GM12878 (cell line): ENCODE measurements at regions of chr4 and their contacts with region 1.

Region 1: GRCh38 chr4:47567511-47567910 is 82.4 kb downstream of the ATP10D start:
- DNase-seq: no peak
- ATAC-seq: no peak
- H3K4me3 ChIP-seq: no peak overlapping the region
- H3K27ac ChIP-seq: no peak overlapping the region
- H3K4me1 ChIP-seq: peaks cover 5% of the 10 kb centered on the region; the same call in 1 of the 2 replicates
- H3K27me3 ChIP-seq: no peaks in the 10 kb centered on the region; a peak in 1 of 4 replicates
- CTCF ChIP-seq: no peak
- EP300 ChIP-seq: no peak
- POLR2A ChIP-seq: no peak
- RAD21 ChIP-seq: no peak

Region 2: GRCh38 chr4:47557255-47557654 is 10.3 kb before region 1 on chr4:
- CTCF ChIA-PET with region 1: interaction called, 9 read pairs
- POLR2A ChIA-PET with region 1: no interaction called
- RAD21 ChIA-PET with region 1: no interaction called
- SMC1A ChIA-PET with region 1: interaction called, 14 read pairs
- in situ Hi-C with region 1: no loop called
- intact Hi-C with region 1: no loop called
- DNase-seq: no peak
- ATAC-seq: no peak
- H3K4me3 ChIP-seq: no peak overlapping the region
- H3K27ac ChIP-seq: no peak overlapping the region
- H3K4me1 ChIP-seq: no peaks in the 10 kb centered on the region
- H3K27me3 ChIP-seq: no peaks in the 10 kb centered on the region
- CTCF ChIP-seq: no peak
- EP300 ChIP-seq: no peak
- POLR2A ChIP-seq: no peak
- RAD21 ChIP-seq: no peak

Region 3: DNA sequence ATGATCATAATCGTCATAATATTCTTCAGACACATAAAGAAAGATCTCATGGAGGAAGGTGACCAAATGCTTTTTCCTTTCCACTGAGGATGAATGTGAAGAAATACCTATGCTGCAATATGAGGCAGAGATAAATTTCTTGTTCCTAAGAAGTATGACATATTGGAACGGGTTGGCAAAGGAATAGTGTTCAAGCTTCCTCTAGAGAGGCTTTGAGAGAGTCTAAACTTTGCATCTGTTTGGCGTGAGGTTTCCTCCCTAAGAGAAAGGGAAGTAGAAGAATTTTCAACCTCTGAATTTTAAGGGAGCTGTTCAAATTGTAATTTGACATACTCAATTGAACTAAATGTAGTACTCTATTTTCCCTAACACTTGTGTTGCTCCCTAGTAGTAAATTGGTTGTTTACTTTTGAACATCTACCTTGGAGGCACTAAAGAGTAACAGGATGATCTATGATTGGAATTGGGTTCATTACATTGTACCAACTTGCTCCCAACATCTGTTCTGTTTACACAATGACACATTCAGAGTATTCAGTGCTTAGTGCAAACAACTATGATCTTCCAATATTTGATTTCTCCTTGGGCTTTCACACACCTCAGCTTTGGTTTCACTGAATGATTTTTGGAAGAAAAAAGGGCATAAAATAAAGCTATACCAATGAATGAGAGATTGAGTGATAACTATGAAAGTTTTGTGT is 148.4 kb after region 1 on chr4:
- CTCF ChIA-PET with region 1: no interaction called
- POLR2A ChIA-PET with region 1: no interaction called
- RAD21 ChIA-PET with region 1: no interaction called
- SMC1A ChIA-PET with region 1: no interaction called
- in situ Hi-C with region 1: no loop called
- intact Hi-C with region 1: no loop called
- DNase-seq: no peak
- ATAC-seq: no peak
- H3K4me3 ChIP-seq: no peak overlapping the region
- H3K27ac ChIP-seq: no peak overlapping the region
- H3K4me1 ChIP-seq: no peaks in the 10 kb centered on the region
- H3K27me3 ChIP-seq: no peaks in the 10 kb centered on the region; a peak in 1 of 4 replicates
- CTCF ChIP-seq: no peak
- EP300 ChIP-seq: no peak
- POLR2A ChIP-seq: no peak
- RAD21 ChIP-seq: no peak